ENCODE measurements at regions of chrX and their contacts with region 1.

Region 1: GRCh38 chrX:24668111-24668510 is 21.0 kb upstream of the PCYT1B start:
- DNase-seq: no peak
- ATAC-seq: no peak

Region 2: DNA sequence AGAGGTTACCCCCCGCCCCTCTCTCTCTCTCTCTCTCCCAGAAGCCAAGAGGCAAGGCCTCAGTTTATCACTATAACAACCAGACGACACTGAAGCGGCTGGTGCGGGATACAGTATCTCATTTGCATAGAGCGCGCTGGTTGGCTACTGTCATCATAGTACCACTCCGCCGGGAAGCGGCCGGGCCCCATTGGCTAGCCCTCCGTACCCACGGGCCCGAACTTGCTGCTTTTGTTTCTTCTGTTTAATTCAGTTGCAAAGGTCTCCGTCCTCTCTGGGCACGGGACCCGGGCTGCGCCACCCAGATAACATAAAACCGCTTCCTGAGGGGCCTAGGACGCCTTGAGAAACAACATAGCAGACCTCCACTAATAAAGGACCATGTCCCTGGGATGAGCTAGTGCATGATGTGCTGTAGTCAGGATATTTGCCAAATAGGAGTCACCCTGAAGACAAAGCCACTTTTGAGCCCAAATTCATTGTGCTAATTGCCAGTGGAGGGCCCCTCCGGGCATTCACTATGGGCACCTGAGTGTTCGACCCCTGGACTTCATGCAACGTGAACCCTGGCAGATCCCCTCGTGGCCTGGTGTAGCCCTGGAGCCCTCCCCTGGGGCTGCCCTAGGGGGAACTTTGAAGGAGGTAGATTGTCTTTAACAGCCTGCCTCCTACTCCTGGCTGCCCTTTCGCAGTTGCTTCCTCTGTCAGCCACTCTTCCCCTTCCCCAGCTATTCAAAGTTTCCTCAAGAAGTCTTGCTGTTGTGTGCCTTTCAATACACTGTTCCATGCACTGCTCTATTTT is 20.7 kb before region 1 on chrX and contains the start of gene PCYT1B:
- intact Hi-C with region 1: loop called (anchors 2 kb)
- DNase-seq: peak; percentile 81
- ATAC-seq: peak; percentile 97
- total RNA-seq, gene PCYT1B: not detected

Region 3: DNA sequence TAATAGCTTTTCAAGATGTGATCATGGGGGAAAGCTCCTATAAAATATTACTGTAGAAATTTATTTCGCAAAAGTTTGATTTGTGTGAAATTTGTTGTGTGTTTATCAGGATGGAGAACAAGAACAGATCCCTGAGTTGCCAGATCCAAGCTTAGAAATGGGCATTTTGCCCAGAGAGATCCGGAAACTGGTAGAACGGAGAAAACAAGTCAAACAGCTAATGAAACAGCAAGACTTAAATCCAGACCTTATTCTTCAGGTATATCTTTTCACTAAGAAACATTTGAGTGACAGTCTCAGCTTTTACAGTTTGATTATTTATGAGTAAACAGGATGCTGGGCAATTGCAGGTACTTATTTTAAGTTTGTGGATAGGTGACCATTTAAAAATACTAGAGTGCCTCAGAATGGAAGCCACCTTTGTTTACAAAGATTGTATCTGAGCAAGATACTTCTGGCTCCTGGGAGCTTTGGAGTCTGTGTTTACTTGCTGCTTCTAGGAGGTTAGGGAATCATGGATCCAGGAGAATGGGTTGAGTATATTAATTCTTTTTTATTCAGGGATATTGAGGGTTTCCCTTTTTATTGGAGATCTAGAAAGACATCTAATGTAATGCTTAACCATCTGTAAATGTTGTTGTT is 80.2 kb after region 1 on chrX:
- intact Hi-C with region 1: no loop called
- DNase-seq: no peak
- ATAC-seq: no peak

Region 4: DNA sequence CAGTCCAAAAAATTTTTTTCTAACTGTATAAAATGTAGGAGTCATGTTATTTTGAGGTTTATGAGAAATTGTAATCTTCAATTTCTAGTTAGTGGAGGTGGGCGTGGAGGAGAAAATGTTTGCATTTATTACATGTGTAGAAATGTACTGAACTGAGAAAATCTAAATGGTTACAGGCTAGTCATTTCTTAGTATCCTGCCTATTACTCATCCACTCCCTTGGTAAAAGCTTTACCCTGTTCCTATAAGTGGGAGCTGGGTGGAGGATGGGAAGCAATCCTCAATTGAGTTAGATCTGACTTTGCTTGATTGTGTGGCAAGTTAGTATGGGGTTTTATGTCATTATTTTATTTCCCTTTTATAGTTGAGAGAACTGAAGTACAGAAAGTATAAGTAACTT is 99.4 kb after region 1 on chrX:
- intact Hi-C with region 1: no loop called
- DNase-seq: no peak
- ATAC-seq: no peak

Region 5: GRCh38 chrX:26032111-26032912 is 1364.2 kb after region 1 on chrX:
- intact Hi-C with region 1: no loop called
- DNase-seq: no peak
- ATAC-seq: no peak

Measured in Right ventricle myocardium inferior (tissue), 1 donor.